Activated naive CD8-positive, alpha-beta T cell treated with anti-CD3 and anti-CD28 coated beads, Interleukin-2, amount 10 ng/mL, durations not matched to agents 7 days and 5 days (primary cell): ENCODE measurements at regions of chr19 and their contacts with region 1.

Region 1: GRCh38 chr19:45643024-45643926 is 4.1 kb upstream of the EML2 start:
- DNase-seq: peak; percentile 95
- ATAC-seq: no peak
- H3K4me3 Mint-ChIP-seq: peak overlapping the region; percentile 73
- H3K27ac Mint-ChIP-seq: peak overlapping the region; percentile 84
- H3K4me1 Mint-ChIP-seq: peaks cover 38% of the 10 kb centered on the region
- H3K27me3 Mint-ChIP-seq: peaks cover 3% of the 10 kb centered on the region

Region 2: GRCh38 chr19:45439569-45440254 is 203.6 kb before region 1 on chr19:
- POLR2A ChIA-PET with region 1: interaction called, 13 read pairs
- DNase-seq: peak; percentile 92
- ATAC-seq: peak; percentile 84
- H3K4me3 Mint-ChIP-seq: peak overlapping the region; percentile 85
- H3K27ac Mint-ChIP-seq: peak overlapping the region; percentile 90
- H3K4me1 Mint-ChIP-seq: peaks cover 21% of the 10 kb centered on the region
- H3K27me3 Mint-ChIP-seq: no peaks in the 10 kb centered on the region

Region 3: DNA sequence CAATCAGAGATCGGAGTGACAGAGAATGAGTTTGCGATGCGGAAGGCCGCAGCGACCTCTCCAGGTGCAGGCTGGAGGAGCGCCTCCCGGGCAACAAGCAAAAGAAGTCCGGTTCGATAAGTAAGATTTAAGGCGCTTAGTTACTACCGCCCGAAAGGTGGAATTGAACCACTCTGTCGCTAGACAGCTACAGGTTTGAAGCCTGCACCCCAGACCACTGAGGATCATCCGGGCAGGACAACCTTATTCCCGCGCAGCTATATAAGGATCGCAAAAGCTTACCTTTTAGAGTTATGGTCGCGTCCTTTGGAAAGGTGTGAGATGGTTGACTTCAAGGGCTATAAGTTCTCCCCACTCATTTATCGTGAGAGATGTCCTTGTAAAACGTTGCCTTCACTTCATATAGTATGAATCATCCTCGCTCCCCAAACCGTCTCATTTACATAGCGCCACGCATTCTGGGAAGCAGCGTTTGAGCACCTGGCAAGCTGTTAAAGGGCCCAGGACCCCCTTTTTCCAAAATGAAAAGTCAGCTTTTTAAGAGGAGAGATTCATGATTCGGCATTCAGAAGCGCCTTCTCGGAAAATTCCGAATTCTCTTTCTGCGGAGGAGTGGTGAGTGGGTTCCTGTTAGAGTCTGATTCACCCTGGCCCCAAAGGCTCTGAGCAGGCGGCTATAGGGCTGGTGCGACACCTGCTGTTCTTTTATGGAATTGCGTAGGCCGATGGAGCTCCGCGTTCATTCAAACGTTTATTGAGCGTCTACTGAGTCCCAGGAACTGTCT is 164.6 kb before region 1 on chr19:
- POLR2A ChIA-PET with region 1: interaction called, 13 read pairs
- DNase-seq: peak; percentile 88
- ATAC-seq: peak; percentile 79
- H3K4me3 Mint-ChIP-seq: peak overlapping the region; percentile 71
- H3K27ac Mint-ChIP-seq: peak overlapping the region; percentile 92
- H3K4me1 Mint-ChIP-seq: peaks cover 24% of the 10 kb centered on the region
- H3K27me3 Mint-ChIP-seq: peaks cover 26% of the 10 kb centered on the region

Region 4: DNA sequence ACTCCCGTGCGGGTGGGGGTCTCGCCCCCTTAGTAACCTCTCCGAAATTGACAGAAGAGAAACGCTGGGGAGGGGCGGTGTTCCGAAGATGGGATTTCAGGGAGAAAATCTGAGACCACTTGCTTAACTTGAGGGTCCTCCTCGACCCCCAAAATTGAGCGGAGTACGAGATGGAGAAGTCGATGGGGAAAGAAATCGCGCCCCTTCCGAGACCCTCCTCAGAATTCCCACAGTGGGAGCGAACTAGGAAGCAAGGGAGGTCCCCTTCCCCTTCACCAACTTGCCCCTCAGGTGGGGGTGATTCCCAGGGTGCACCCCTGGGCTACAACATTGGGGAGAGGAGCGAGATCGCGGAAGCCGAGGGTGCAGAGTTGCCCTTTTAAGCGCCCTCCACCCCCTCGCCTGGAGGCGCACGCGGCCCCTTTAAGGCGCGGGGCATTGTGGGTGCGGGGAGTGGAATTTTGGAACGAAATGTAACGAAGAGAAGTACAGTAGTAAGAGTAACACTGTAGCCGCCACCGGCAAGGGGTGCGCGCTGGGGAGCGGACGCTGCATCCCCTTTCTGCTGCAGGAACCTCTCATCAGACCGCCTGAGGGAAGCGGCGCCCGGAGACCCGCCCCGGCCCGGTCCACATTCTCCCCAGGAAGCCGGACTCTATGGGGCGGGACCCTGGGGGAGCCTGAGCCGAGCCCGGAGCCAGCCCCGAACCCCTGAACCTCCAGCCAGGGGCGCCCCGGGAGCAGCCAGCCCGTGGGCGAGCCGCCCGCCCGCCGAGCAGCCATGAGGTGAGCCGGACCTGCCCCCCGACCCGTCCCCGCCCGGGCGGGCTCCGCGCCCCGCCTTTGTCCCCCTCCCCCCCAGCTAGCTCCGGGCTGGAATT is 136.0 kb before region 1 on chr19 and contains the start of gene VASP:
- POLR2A ChIA-PET with region 1: interaction called, 16 read pairs
- DNase-seq: peak; percentile 92
- ATAC-seq: peak; percentile 66
- H3K4me3 Mint-ChIP-seq: peak within 1 kb of the TSS; percentile 98
- H3K27ac Mint-ChIP-seq: peak within 1 kb of the TSS; percentile 96
- H3K4me1 Mint-ChIP-seq: peaks cover 31% of the 10 kb centered on the region
- H3K27me3 Mint-ChIP-seq: no peaks in the 10 kb centered on the region
- total RNA-seq, gene VASP: 166 to 180 TPM

Region 5: DNA sequence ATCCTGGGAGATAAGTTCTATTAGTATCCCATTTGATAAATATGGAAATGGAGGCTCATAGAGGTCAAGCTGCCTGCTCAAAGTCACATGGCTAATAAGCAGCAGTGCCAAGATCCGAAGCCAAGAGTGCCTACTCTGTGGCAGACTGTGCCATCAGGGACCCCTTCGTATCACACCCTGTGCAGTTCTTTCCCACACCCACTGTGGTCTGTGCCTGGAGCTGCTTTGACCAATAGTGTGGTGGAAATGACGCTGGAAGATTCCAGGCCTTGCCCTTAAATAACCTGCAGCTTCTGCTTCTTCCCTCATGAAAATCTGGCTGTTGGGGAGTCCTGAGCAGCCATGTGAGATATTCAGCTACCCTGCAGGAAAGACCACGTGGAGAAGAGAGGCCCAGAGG is 68.7 kb before region 1 on chr19:
- POLR2A ChIA-PET with region 1: no interaction called
- DNase-seq: no peak
- ATAC-seq: no peak
- H3K4me3 Mint-ChIP-seq: no peak overlapping the region
- H3K27ac Mint-ChIP-seq: no peak overlapping the region
- H3K4me1 Mint-ChIP-seq: peaks cover 15% of the 10 kb centered on the region
- H3K27me3 Mint-ChIP-seq: no peaks in the 10 kb centered on the region

Region 6: GRCh38 chr19:45584332-45585157 is 58.7 kb before region 1 on chr19 and contains the start of gene OPA3:
- POLR2A ChIA-PET with region 1: interaction called, 16 read pairs
- DNase-seq: peak; percentile 95
- ATAC-seq: peak; percentile 93
- H3K4me3 Mint-ChIP-seq: peak within 1 kb of the TSS; percentile 93
- H3K27ac Mint-ChIP-seq: peak within 1 kb of the TSS; percentile 94
- H3K4me1 Mint-ChIP-seq: peaks cover 8% of the 10 kb centered on the region
- H3K27me3 Mint-ChIP-seq: peaks cover 8% of the 10 kb centered on the region
- total RNA-seq, gene OPA3: 10.6 to 11.8 TPM

Region 7: DNA sequence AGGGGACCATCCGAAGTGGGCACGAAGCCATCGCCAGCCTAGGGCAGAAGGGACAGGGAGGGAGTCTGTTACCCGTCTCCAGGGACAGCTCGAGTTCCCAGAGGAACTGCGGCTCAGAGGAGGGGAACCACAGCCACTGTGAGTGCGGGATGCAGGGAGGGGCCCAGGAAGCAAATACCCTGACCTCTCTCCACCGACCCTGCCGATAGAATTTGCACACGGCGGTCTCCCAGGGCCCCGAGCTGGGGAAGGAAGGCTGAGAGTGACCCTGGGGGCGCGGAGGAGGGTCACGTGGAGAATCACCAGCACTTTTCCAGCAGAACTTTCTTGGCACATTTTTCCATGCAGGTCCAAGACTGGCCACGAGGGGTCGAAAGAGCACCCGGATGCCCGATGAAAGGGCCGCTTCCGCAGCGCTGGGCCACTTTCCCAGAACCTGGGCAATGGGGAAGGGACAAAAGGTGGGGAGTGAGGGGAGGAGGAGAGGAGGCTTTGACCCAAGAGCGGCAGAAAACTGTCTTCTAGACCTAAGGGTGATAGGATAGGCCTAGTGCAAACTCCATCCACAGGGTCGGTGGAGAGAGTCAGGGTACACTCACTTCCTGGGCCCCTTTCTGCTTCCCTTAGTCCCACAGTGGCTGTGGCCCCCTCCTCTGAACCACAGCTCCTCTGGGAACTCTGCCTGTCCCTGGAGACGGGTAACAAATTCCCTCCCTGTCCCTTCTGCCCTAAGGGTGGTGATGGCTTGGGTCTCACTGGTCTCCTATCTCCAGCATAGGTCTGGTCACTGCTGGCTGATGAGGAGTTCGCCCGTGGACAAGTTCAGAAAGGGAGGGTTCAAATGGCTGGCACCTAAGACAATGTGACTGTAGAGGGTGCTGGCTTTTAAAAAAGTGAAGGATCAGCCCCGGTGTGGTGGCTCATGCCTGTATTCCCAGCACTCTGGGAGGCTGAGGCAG is 35.9 kb before region 1 on chr19:
- POLR2A ChIA-PET with region 1: interaction called, 19 read pairs
- DNase-seq: peak; percentile 60
- ATAC-seq: peak; percentile 47
- H3K4me3 Mint-ChIP-seq: peak overlapping the region; percentile 59
- H3K27ac Mint-ChIP-seq: peak overlapping the region; percentile 81
- H3K4me1 Mint-ChIP-seq: peaks cover 9% of the 10 kb centered on the region
- H3K27me3 Mint-ChIP-seq: peaks cover 14% of the 10 kb centered on the region

Region 8: GRCh38 chr19:45862564-45863334 is 219.5 kb after region 1 on chr19 and contains the start of gene SYMPK:
- POLR2A ChIA-PET with region 1: no interaction called
- DNase-seq: peak; percentile 98
- ATAC-seq: peak; percentile 96
- H3K4me3 Mint-ChIP-seq: peak within 1 kb of the TSS; percentile 91
- H3K27ac Mint-ChIP-seq: peak within 1 kb of the TSS; percentile 97
- H3K4me1 Mint-ChIP-seq: peaks cover 21% of the 10 kb centered on the region
- H3K27me3 Mint-ChIP-seq: peaks cover 39% of the 10 kb centered on the region
- total RNA-seq, gene SYMPK: 100 to 113 TPM